Mammary epithelial cell (primary cell): ENCODE measurements at regions of chr7 and their contacts with region 1.

Region 1: GRCh38 chr7:156240532-156240931 is 400.0 kb upstream of the RNF32 start:
- DNase-seq: no peak
- H3K4me3 ChIP-seq: no peak overlapping the region
- H3K27ac ChIP-seq: no peak overlapping the region
- H3K4me1 ChIP-seq: no peaks in the 10 kb centered on the region
- H3K27me3 ChIP-seq: no peaks in the 10 kb centered on the region
- CTCF ChIP-seq: no peak

Region 2: GRCh38 chr7:156203923-156204322 is 36.6 kb before region 1 on chr7:
- CTCF ChIA-PET with region 1: no interaction called
- dilution Hi-C with region 1: loop called (anchors 5 kb)
- in situ Hi-C with region 1: no loop called
- intact Hi-C with region 1: no loop called
- DNase-seq: no peak
- H3K4me3 ChIP-seq: no peak overlapping the region
- H3K27ac ChIP-seq: no peak overlapping the region
- H3K4me1 ChIP-seq: no peaks in the 10 kb centered on the region
- H3K27me3 ChIP-seq: no peaks in the 10 kb centered on the region
- CTCF ChIP-seq: no peak

Region 3: GRCh38 chr7:156334636-156335035 is 94.1 kb after region 1 on chr7:
- CTCF ChIA-PET with region 1: no interaction called
- dilution Hi-C with region 1: loop called (anchors 5 kb)
- in situ Hi-C with region 1: no loop called
- intact Hi-C with region 1: no loop called
- DNase-seq: no peak
- H3K4me3 ChIP-seq: no peak overlapping the region
- H3K27ac ChIP-seq: no peak overlapping the region
- H3K4me1 ChIP-seq: no peaks in the 10 kb centered on the region
- H3K27me3 ChIP-seq: no peaks in the 10 kb centered on the region
- CTCF ChIP-seq: no peak

Region 4: GRCh38 chr7:156368053-156368851 is 127.7 kb after region 1 on chr7:
- CTCF ChIA-PET with region 1: no interaction called
- dilution Hi-C with region 1: no loop called
- in situ Hi-C with region 1: no loop called
- intact Hi-C with region 1: no loop called
- DNase-seq: no peak
- H3K4me3 ChIP-seq: no peak overlapping the region
- H3K27ac ChIP-seq: no peak overlapping the region
- H3K4me1 ChIP-seq: no peaks in the 10 kb centered on the region
- H3K27me3 ChIP-seq: no peaks in the 10 kb centered on the region
- CTCF ChIP-seq: no peak